ENCODE measurements at regions of chr2 and their contacts with region 1.

Region 1: GRCh38 chr2:160493227-160494028 is at the start of gene RBMS1:
- DNase-seq: peak; percentile 58
- H3K4me3 Mint-ChIP-seq: peak within 1 kb of the TSS; percentile 98
- H3K27ac Mint-ChIP-seq: peak within 1 kb of the TSS; percentile 82
- H3K4me1 Mint-ChIP-seq: peaks cover 8% of the 10 kb centered on the region
- H3K27me3 Mint-ChIP-seq: no peaks in the 10 kb centered on the region
- CTCF ChIP-seq: no peak
- total RNA-seq, gene RBMS1: 57.9 and 61.9 TPM in 2 replicates

Region 2: DNA sequence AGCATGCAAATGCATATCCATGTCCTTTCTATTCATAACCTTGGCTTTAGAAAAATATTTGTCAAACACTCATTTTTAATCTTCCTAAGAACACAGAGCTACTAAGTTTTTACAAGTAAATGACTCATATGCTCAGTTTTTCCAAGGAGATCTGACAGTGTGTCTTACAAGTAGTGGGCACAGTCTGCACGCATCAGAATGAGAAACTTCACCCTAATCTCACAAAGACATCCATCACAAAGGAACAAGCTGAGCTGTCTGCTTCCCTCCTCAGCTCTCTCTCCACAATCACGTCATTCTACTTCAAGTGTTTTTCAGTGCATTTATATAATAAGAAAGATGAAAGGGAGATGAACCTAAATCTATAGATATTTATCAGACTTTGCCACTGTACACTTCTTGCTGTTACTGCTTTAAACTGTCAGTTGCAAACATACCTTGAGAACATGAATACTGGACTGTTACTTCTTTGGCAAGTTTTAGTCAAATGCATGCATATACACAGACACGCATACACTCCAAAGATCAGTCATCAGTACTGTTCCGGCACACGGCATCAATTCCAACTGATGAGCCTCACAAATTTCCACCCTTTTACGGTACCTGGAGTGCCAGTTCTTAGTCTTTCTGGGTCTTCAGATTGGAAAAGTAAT is 75.6 kb before region 1 on chr2:
- CTCF ChIA-PET with region 1: interaction called, 5 read pairs
- intact Hi-C with region 1: loop called (anchors 5 kb)
- DNase-seq: no peak
- H3K4me3 Mint-ChIP-seq: no peak overlapping the region
- H3K27ac Mint-ChIP-seq: no peak overlapping the region
- H3K4me1 Mint-ChIP-seq: peaks cover 24% of the 10 kb centered on the region
- H3K27me3 Mint-ChIP-seq: no peaks in the 10 kb centered on the region
- CTCF ChIP-seq: no peak

Region 3: GRCh38 chr2:160566717-160567116 is 73.3 kb after region 1 on chr2:
- CTCF ChIA-PET with region 1: no interaction called
- intact Hi-C with region 1: no loop called
- DNase-seq: no peak
- H3K4me3 Mint-ChIP-seq: no peak overlapping the region
- H3K27ac Mint-ChIP-seq: no peak overlapping the region
- H3K4me1 Mint-ChIP-seq: peaks cover 6% of the 10 kb centered on the region
- H3K27me3 Mint-ChIP-seq: no peaks in the 10 kb centered on the region
- CTCF ChIP-seq: no peak

Measured in Calu3 (cell line).